Ovary (tissue), 10 donors: ENCODE measurements at regions of chr7 and their contacts with region 1.

Region 1: GRCh38 chr7:240791-241421 is 48.5 kb downstream of the FAM20C start:
- DNase-seq: no peak
- H3K4me3 ChIP-seq: no peak overlapping the region
- H3K27ac ChIP-seq: no peak overlapping the region
- H3K4me1 ChIP-seq: peaks cover 18% of the 10 kb centered on the region
- H3K27me3 ChIP-seq: no peaks in the 10 kb centered on the region
- CTCF ChIP-seq: no peak
- EP300 ChIP-seq: no peak
- POLR2A ChIP-seq: no peak

Region 2: DNA sequence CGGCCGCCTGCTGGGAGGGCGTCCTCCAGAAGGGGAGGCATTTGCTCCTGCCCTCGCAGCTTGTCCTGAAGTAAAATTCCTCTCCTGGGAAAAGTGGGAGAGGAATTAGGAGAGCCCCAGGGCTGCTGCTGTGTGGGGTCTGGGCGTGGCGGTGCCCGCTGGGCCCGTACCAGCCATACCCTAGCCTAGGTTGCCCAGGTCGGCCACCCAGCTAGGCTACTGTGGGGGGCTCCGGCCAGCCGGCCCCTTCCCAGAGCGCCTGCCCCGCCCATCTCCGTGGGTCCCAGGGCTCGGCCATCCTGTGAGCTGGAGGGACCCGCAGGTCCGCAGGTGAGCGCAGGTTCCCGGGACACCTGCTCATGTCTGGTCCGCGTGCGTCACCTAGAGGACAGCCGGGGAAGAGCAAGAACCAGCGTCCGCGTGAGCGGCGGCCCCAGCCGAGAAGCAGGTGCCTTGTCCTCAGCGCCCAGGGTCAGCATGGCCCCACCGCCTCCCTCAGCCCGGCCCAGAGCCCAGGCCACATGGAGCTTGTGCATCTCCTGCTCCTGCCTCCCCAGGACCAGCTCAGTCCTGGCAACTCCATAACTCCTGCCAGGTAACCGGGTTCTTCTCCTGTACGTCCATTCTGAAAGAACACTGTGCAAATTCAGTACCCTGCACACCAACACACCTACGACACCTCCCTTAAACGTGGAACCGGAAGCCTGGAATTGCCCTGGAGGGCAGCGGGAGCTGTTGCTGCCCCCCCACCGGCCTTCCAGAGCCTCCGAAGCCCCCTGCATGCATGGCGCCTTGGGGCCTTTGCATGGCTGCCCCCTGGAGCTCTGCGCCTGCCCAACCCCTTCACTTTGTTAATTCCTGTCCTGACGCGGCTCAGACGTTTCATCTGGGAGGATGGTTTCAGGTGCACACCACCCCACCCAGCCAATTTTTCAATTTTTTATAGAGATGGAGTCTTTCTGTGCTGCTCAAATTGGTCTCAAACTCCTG is 26.2 kb after region 1 on chr7:
- intact Hi-C with region 1: no loop called
- DNase-seq: peak in 2 of 5 donors; percentile 30 to 45
- H3K4me3 ChIP-seq: no peak overlapping the region
- H3K27ac ChIP-seq: no peak overlapping the region
- H3K4me1 ChIP-seq: no peaks in the 10 kb centered on the region
- H3K27me3 ChIP-seq: no peaks in the 10 kb centered on the region
- CTCF ChIP-seq: no peak
- EP300 ChIP-seq: no peak
- POLR2A ChIP-seq: no peak

Region 3: DNA sequence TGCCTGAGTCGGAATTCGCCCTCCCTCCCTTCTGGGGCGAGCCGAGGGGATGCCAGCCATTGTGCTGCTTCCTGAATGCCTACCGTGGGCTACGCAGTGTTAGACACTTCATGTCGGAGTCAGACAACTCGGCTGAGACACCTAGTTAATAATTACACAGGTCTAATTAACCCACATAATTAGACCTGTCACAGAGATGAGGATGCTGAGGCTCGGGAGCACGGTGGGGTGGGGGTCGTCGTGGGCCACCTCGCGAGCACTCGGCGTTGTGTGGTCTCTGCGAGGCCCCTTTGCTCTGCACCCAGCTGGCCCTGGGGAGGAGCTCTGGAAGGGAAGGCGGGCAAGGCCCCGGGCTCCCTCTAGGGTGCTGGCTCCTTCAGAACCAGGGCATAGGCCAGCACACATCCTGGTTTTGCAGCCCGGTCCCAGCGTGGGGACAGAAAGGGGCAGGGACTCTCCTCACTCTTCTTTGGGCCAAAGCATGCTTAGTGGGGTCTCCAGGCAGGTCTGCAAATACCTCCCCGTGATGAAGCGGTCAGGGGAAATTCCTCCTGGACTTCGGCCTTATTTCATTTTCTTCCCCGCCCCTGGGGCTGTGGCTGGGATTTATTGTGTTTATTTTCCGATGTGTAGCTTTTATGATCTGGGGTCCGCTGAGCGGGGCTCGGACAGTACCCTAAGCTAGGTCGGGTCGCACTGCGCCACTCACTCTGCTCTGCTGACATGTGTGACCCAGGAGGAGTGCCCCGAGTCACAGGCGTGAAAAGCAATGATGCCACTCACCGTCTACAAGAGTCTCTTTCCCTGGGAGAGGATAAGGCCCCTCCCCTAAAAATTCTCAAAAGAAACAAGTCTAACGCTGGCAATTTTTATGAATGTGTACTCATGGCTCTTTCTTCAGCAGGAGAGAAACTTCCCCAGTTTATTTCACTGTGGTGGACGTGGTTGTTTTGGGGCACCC is 44.1 kb after region 1 on chr7:
- intact Hi-C with region 1: no loop called
- DNase-seq: peak in 1 of 5 donors; percentile 23
- H3K4me3 ChIP-seq: no peak overlapping the region
- H3K27ac ChIP-seq: no peak overlapping the region
- H3K4me1 ChIP-seq: no peaks in the 10 kb centered on the region
- H3K27me3 ChIP-seq: peaks cover 3% of the 10 kb centered on the region
- CTCF ChIP-seq: no peak
- EP300 ChIP-seq: no peak
- POLR2A ChIP-seq: no peak

Region 4: GRCh38 chr7:726084-726853 is 485.4 kb after region 1 on chr7 and contains the start of gene DNAAF5:
- intact Hi-C with region 1: loop called in 1 of 4 experiments (anchors 5 kb)
- DNase-seq: peak; percentile 76 to 89 (median 83)
- H3K4me3 ChIP-seq: peak within 1 kb of the TSS; percentile 83
- H3K27ac ChIP-seq: peak within 1 kb of the TSS in 1 of 2 donors; percentile 61
- H3K4me1 ChIP-seq: peaks cover 13% of the 10 kb centered on the region
- H3K27me3 ChIP-seq: no peaks in the 10 kb centered on the region
- CTCF ChIP-seq: no peak
- EP300 ChIP-seq: no peak
- POLR2A ChIP-seq: no peak
- total RNA-seq, gene DNAAF5: 16.3 to 41.0 (median 26.0) TPM

Region 5: GRCh38 chr7:992709-993607 is 752.1 kb after region 1 on chr7:
- intact Hi-C with region 1: no loop called
- DNase-seq: peak; percentile 97 to 99 (median 98)
- H3K4me3 ChIP-seq: no peak overlapping the region
- H3K27ac ChIP-seq: no peak overlapping the region
- H3K4me1 ChIP-seq: peaks cover 14% of the 10 kb centered on the region
- H3K27me3 ChIP-seq: no peaks in the 10 kb centered on the region
- CTCF ChIP-seq: peak; percentile 99 to 100 (median 100)
- EP300 ChIP-seq: no peak
- POLR2A ChIP-seq: peak; percentile 35